ENCODE measurements at regions of chr6 and their contacts with region 1.

Region 1: GRCh38 chr6:31546962-31547726 is at the start of gene NFKBIL1:
- DNase-seq: peak; percentile 83 to 91 (median 85)
- H3K4me3 ChIP-seq: peak within 1 kb of the TSS; percentile 55 to 79
- H3K4me3 Mint-ChIP-seq: peak within 1 kb of the TSS; percentile 85 to 93 (median 88)
- H3K27ac ChIP-seq: peak within 1 kb of the TSS; percentile 85
- H3K27ac Mint-ChIP-seq: peak within 1 kb of the TSS; percentile 93 to 99 (median 97)
- H3K4me1 ChIP-seq: peaks cover 45% of the 10 kb centered on the region
- H3K4me1 Mint-ChIP-seq: peaks cover 24 to 49% (median 36%) of the 10 kb centered on the region in 4 donors
- H3K27me3 ChIP-seq: no peaks in the 10 kb centered on the region
- H3K27me3 Mint-ChIP-seq: no peaks in the 10 kb centered on the region
- total RNA-seq, gene NFKBIL1: 9.8 to 13.3 TPM

Region 2: GRCh38 chr6:31559958-31560696 is 13.0 kb after region 1 on chr6:
- CTCF ChIA-PET with region 1: interaction called, 13 read pairs
- POLR2A ChIA-PET with region 1: interaction called, 3,597 read pairs
- intact Hi-C with region 1: no loop called
- DNase-seq: peak in 3 of 5 donors; percentile 35 to 76 (median 38)
- H3K4me3 ChIP-seq: peak overlapping the region in 1 of 2 donors; percentile 53
- H3K4me3 Mint-ChIP-seq: peak overlapping the region; percentile 78 to 90 (median 84)
- H3K27ac ChIP-seq: peak overlapping the region; percentile 58
- H3K27ac Mint-ChIP-seq: peak overlapping the region; percentile 91 to 99 (median 95)
- H3K4me1 ChIP-seq: peaks cover 87% of the 10 kb centered on the region
- H3K4me1 Mint-ChIP-seq: peaks cover 53 to 87% (median 65%) of the 10 kb centered on the region in 4 donors
- H3K27me3 ChIP-seq: no peaks in the 10 kb centered on the region
- H3K27me3 Mint-ChIP-seq: no peaks in the 10 kb centered on the region

Region 3: GRCh38 chr6:31580807-31581433 is 33.8 kb after region 1 on chr6:
- CTCF ChIA-PET with region 1: interaction called, 595 read pairs
- POLR2A ChIA-PET with region 1: interaction called, 3,597 read pairs
- intact Hi-C with region 1: loop called (anchors 1 kb)
- DNase-seq: peak; percentile 83 to 89 (median 85)
- H3K4me3 ChIP-seq: peak overlapping the region; percentile 89 to 95
- H3K4me3 Mint-ChIP-seq: peak overlapping the region; percentile 95 to 100 (median 99)
- H3K27ac ChIP-seq: peak overlapping the region; percentile 92
- H3K27ac Mint-ChIP-seq: peak overlapping the region; percentile 96 to 100 (median 99)
- H3K4me1 ChIP-seq: peaks cover 71% of the 10 kb centered on the region
- H3K4me1 Mint-ChIP-seq: peaks cover 32 to 95% (median 53%) of the 10 kb centered on the region in 4 donors
- H3K27me3 ChIP-seq: no peaks in the 10 kb centered on the region
- H3K27me3 Mint-ChIP-seq: no peaks in the 10 kb centered on the region

Region 4: DNA sequence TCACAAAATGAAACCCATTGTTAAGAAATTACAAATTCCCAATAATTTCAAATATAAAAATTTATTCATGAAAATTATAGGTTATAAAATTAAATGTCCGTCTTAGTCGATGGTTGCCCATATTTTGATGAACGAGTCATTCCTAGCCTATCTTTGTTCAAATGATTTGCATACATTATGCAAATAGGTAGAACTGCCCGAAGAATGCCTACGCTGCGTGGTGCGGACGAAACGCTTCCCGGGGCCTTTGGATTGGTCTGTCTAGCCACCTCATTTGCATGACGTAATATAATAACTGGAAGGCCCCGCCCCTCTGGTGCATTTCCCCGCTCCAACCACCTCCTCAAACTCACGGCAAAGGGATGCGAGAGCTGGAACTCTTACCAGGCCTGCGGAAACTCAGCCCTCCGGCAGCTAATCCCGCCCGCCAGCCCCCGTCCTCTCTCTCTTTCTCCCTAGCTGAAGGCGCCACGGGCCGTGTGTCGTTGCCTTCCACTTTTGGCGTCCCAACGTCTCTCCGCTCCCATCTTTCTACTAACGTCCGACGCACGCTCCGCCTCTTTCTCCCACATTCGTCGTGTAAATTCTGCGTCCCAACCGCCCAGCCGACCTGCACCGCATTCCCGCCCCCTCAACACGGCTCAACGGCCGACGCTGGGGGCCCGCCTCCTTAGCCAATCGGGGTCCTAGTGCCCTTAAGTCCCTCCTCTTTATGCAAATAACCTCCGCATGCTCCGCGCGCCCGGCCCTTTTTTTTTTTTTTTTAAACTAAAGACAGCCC is 72.9 kb after region 1 on chr6:
- CTCF ChIA-PET with region 1: interaction called, 5 read pairs
- POLR2A ChIA-PET with region 1: interaction called, 20 read pairs
- intact Hi-C with region 1: loop called (anchors 1 kb)
- DNase-seq: peak; percentile 96 to 98 (median 98)
- H3K4me3 ChIP-seq: peak overlapping the region in 1 of 2 donors; percentile 93
- H3K4me3 Mint-ChIP-seq: peak overlapping the region; percentile 89 to 98 (median 93)
- H3K27ac ChIP-seq: peak overlapping the region; percentile 99
- H3K27ac Mint-ChIP-seq: peak overlapping the region; percentile 91 to 99 (median 98)
- H3K4me1 ChIP-seq: peaks cover 34% of the 10 kb centered on the region
- H3K4me1 Mint-ChIP-seq: peaks cover 21 to 49% (median 39%) of the 10 kb centered on the region in 4 donors
- H3K27me3 ChIP-seq: no peaks in the 10 kb centered on the region
- H3K27me3 Mint-ChIP-seq: no peaks in the 10 kb centered on the region

Region 5: DNA sequence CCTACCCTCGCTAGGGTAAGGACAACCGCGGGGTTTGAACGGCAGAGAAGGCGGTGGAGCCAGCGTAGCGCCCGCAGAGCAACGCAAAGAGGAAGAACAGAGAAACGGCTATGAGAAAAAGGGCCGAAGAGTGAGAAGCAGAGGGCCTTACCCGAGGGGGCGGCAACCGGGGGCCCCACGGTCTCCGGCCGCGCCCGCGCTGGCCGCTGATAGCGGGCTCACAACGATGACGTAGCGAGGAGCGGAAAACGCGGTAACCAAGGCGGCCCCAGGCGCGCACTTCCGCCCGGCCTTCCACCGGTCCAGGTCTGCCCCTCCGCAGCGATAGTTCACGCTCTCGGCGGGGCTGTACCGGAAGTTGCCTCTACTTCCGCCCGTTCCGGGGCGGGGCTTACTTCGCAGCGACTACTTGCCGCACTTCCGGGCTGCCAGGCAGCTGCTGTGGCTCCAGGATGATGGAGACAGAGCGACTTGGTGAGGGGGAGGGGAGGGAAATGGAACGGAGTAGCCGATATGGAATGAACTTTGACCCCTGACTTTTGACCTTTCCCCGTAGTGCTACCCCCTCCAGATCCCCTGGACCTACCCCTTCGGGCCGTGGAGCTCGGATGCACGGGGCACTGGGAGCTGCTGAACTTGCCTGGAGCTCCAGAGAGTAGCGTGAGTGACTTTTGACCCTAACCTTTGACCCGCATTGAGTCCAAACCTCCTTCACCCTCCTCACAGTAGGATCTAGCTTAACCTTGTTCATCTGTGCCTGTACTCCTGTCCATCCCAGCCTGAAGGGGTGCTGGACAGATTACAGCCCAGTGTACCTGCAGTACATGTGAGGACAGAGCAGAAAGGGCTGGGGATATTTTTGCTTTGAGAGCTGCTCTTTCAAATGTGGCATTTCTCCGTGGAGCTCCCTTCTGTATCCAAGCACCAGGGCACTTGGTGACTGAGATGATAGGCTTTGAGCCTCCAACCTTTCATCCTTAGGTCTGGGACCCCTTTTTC is 411.9 kb after region 1 on chr6 and contains the starts of genes NELFE and SKIC2:
- CTCF ChIA-PET with region 1: no interaction called
- POLR2A ChIA-PET with region 1: no interaction called
- intact Hi-C with region 1: loop called (anchors 5 kb)
- DNase-seq: peak; percentile 98 to 99 (median 99)
- H3K4me3 ChIP-seq: peak within 1 kb of the TSS; percentile 95
- H3K4me3 Mint-ChIP-seq: peak within 1 kb of the TSS; percentile 92 to 98 (median 96)
- H3K27ac ChIP-seq: peak within 1 kb of the TSS; percentile 98
- H3K27ac Mint-ChIP-seq: peak within 1 kb of the TSS; percentile 97 to 99 (median 98)
- H3K4me1 ChIP-seq: peaks cover 35% of the 10 kb centered on the region
- H3K4me1 Mint-ChIP-seq: peaks cover 21 to 43% (median 32%) of the 10 kb centered on the region in 4 donors
- H3K27me3 ChIP-seq: no peaks in the 10 kb centered on the region
- H3K27me3 Mint-ChIP-seq: no peaks in the 10 kb centered on the region
- total RNA-seq, gene NELFE: 45.8 to 49.0 TPM
- total RNA-seq, gene SKIC2: 117 to 119 TPM